ENCODE measurements at regions of chr10 and their contacts with region 1.

Region 1: GRCh38 chr10:45627412-45628048 is 45.0 kb downstream of the ZFAND4 start:
- DNase-seq: no peak
- H3K4me3 ChIP-seq: no peak overlapping the region
- H3K27ac ChIP-seq: no peak overlapping the region
- H3K4me1 ChIP-seq: no peaks in the 10 kb centered on the region
- CTCF ChIP-seq: no peak

Region 2: DNA sequence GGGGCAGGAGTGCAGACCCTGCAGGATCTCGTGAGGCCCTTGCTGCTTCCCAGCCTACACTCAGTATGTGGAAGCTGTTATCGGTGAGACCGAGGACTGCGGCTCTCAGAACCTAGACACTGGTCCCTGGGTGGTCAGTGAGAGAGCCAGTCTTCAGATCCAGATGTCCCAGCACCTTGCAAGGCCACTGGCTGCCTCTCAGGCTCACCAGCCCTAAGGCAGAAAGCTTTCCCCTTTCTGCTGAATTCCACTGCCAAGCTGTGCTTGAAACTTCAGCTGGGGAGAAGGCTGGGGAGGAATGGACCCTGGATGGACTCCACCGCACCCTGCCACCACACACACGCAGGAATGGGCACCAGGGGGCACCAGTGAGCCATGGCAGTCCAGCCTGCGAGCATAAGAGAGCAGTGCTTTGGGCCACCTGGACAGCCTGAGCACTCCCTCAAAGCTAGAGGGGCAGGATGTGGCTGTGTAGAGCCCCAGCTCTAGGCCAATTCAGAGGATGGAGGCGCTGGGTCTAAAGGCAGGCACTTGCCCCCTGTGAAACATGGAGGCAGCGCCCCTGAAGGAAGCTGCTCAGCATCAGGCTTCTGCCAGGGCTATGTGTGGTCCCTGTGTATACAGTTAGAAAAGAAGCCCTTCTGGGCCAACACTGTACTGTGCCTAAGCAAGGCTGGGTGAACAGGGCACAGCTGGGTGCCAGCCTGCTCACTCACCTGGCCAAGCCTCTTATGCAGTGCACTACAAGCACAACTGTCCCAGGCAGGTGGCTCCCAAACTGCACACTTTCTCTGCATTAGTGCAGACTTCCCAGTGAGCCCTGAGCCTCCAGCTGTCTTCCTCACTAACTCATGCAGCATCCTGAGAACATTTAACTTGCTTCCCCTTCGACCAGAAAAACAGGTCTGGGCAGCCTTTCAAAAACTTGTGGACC is 694.7 kb before region 1 on chr10:
- CTCF ChIA-PET with region 1: no interaction called
- POLR2A ChIA-PET with region 1: no interaction called
- intact Hi-C with region 1: no loop called
- DNase-seq: peak; percentile 90
- H3K4me3 ChIP-seq: no peak overlapping the region
- H3K27ac ChIP-seq: no peak overlapping the region
- H3K4me1 ChIP-seq: no peaks in the 10 kb centered on the region
- CTCF ChIP-seq: peak; percentile 94

Region 3: DNA sequence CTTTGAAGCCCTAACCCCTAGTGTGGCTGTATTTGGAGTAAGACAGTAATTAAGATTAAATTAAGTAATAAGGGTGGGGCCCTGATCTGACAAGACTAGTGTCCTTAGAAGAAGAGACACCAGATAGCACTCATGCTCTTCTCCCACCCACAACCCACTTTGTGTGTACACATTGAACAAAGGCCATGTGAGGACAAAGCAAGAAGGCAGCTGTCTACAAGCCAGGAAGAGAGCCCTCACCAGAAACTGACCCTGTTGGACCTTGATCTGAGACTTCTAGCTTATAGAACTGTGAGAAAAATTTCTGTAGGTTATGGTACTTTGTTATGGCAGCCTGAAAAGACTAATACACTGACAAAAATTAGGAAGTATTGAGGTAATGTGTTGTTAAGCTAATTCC is 14.8 kb before region 1 on chr10:
- CTCF ChIA-PET with region 1: no interaction called
- POLR2A ChIA-PET with region 1: interaction called, 10 read pairs
- intact Hi-C with region 1: no loop called
- DNase-seq: no peak
- H3K4me3 ChIP-seq: no peak overlapping the region
- H3K27ac ChIP-seq: no peak overlapping the region
- H3K4me1 ChIP-seq: no peaks in the 10 kb centered on the region
- CTCF ChIP-seq: no peak

Measured in OCI-LY7 (cell line).